ENCODE measurements at regions of chr19 and their contacts with region 1.

Region 1: GRCh38 chr19:2950286-2951124 is 5.7 kb upstream of the ZNF77 start:
- DNase-seq: peak; percentile 100
- ATAC-seq: peak; percentile 96

Region 2: DNA sequence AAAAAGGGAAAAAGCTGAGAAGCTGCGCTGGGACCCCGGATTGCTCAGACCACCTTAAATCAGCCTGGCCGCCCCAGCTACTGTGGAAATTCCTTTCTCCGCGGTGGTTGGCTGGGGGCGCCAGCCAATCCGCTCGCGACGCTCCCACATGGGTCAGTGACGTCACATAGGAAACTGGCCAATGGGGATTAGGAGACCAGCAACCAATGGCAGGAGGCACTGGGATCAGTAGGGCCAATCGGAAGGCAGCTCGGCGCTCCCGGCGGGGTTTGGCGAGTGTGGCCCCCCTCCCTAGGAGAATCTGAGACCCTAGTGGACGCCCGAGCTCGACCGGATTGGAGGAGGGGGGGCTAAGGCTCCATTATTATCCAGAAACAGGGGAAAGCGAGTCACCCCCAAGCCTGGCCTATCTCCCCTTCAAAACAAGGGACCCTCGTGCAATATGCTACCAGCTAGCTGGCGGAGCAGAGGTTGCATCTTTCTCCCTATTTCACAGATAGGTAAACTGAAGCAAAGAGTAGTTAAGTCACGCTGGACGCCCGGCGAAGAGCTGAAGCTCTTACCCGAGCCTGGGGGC is 85.1 kb after region 1 on chr19:
- intact Hi-C with region 1: no loop called
- DNase-seq: peak; percentile 98
- ATAC-seq: peak; percentile 95

Region 3: GRCh38 chr19:3154957-3155736 is 204.6 kb after region 1 on chr19:
- intact Hi-C with region 1: loop called (anchors 10 kb)
- DNase-seq: peak; percentile 71
- ATAC-seq: peak; percentile 85